ENCODE measurements at regions of chrX and their contacts with region 1.

Region 1: GRCh38 chrX:9464435-9465371 is at the start of gene TBL1X:
- DNase-seq: peak; percentile 70 to 79
- ATAC-seq: peak; percentile 55 to 63 (median 62)
- H3K4me3 ChIP-seq: peak within 1 kb of the TSS; percentile 80
- H3K27ac ChIP-seq: peak within 1 kb of the TSS; percentile 78
- H3K4me1 ChIP-seq: peaks cover 9% of the 10 kb centered on the region
- H3K27me3 ChIP-seq: peaks cover 0 to 24% (median 0%) of the 10 kb centered on the region in 3 donors
- CTCF ChIP-seq: no peak
- total RNA-seq, gene TBL1X: 7.1 to 17.6 (median 8.0) TPM

Region 2: GRCh38 chrX:9285342-9285771 is 179.3 kb before region 1 on chrX:
- intact Hi-C with region 1: no loop called
- DNase-seq: no peak
- ATAC-seq: no peak
- H3K4me3 ChIP-seq: no peak overlapping the region
- H3K27ac ChIP-seq: no peak overlapping the region
- H3K4me1 ChIP-seq: no peaks in the 10 kb centered on the region
- H3K27me3 ChIP-seq: peaks cover 0 to 5% (median 0%) of the 10 kb centered on the region in 3 donors
- CTCF ChIP-seq: no peak

Region 3: DNA sequence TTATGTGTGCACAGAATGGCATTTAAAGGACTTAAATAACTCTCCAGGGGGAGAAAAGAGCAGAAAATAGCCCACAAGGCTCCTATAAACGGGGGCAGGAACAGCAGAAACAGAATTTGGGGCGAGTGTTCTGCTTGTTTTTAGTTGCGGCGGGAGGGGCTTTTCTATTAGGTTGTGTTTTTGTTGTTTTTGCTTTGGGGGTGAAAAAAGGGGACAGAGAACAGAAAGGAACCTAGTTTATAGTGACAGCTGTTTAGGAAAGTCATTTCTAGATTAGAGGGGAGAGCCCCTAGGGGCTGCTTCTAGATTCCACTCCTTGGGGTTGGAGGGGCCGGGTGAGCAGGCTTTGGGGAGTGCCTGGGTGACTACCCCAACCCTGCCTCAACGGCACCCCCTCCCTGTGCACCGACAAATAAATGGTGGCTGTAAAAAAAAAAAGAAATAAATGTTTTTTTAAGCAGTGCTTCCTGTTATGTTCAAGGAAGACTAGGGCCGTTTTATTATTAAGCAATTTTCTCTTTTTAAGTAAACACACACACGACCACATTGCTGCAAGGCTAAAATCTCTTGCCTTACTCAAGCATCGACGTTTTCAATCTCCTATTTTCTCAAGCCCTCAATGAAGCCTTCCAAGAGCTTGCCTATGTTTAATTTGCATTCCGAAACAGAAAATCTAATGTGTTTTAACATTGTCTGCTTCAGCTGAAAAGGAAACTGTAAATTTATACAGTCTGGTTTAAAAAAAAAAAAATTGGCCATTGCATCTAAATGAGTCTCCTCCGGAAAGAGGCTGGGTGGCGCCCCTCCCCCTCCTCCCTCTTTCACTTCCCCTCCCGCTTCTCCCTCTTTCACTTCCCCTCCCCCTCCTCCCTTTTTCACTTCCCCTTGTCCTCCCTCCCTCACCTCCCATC is 123.2 kb before region 1 on chrX:
- intact Hi-C with region 1: loop called (anchors 1 to 2 kb)
- DNase-seq: peak; percentile 66 to 82
- ATAC-seq: peak in 1 of 4 donors; percentile 34
- H3K4me3 ChIP-seq: peak overlapping the region; percentile 42
- H3K27ac ChIP-seq: peak overlapping the region; percentile 62
- H3K4me1 ChIP-seq: peaks cover 23% of the 10 kb centered on the region
- H3K27me3 ChIP-seq: peaks cover 0 to 9% (median 0%) of the 10 kb centered on the region in 3 donors
- CTCF ChIP-seq: no peak

Region 4: DNA sequence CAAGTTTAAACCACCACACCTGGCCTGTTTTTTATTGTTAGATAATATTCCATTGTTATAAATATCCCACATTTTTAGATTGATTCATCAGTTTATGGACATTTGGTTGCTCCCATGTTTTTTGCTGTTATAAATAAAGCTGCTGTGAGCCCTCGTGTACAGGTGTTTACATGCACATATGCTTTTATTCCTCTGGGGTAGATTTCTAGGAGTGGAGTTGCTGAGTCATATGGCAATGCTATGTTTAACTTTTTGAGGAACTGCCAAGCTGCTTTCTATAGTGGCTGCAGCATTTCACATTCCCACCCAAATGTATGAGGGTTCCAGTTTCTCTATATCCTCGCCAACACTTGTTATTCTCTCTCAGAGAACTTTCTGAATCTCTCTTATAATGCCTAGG is 90.7 kb after region 1 on chrX:
- intact Hi-C with region 1: loop called in 1 of 2 experiments (anchors 10 kb)
- DNase-seq: no peak
- ATAC-seq: no peak
- H3K4me3 ChIP-seq: no peak overlapping the region
- H3K27ac ChIP-seq: no peak overlapping the region
- H3K4me1 ChIP-seq: no peaks in the 10 kb centered on the region
- H3K27me3 ChIP-seq: no peaks in the 10 kb centered on the region
- CTCF ChIP-seq: no peak

Region 5: DNA sequence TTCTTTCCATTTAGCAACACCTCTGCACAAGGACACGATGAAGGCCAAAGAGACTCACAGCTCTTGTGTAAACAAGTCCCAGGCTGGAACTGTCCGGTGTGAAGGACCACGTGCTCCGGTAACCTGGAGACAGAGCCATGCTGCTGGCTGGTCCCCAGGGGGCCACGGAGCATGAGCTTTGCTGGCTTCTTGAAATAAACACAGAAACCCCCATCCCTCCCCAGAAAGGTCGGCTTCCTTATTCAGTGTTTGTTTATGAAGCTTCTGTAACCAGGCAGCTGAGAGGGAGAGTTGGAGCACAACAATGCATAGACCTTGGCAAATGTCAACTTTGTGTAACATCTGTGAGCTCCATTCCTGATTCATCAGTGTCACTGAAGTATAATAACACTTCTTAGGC is 191.6 kb after region 1 on chrX:
- intact Hi-C with region 1: loop called in 1 of 2 experiments (anchors 10 kb)
- DNase-seq: no peak
- ATAC-seq: peak; percentile 54 to 87 (median 82)
- H3K4me3 ChIP-seq: no peak overlapping the region
- H3K27ac ChIP-seq: no peak overlapping the region
- H3K4me1 ChIP-seq: no peaks in the 10 kb centered on the region
- H3K27me3 ChIP-seq: no peaks in the 10 kb centered on the region
- CTCF ChIP-seq: no peak